AG04450 (cell line): ENCODE measurements at regions of chr9 and their contacts with region 1.

Region 1: DNA sequence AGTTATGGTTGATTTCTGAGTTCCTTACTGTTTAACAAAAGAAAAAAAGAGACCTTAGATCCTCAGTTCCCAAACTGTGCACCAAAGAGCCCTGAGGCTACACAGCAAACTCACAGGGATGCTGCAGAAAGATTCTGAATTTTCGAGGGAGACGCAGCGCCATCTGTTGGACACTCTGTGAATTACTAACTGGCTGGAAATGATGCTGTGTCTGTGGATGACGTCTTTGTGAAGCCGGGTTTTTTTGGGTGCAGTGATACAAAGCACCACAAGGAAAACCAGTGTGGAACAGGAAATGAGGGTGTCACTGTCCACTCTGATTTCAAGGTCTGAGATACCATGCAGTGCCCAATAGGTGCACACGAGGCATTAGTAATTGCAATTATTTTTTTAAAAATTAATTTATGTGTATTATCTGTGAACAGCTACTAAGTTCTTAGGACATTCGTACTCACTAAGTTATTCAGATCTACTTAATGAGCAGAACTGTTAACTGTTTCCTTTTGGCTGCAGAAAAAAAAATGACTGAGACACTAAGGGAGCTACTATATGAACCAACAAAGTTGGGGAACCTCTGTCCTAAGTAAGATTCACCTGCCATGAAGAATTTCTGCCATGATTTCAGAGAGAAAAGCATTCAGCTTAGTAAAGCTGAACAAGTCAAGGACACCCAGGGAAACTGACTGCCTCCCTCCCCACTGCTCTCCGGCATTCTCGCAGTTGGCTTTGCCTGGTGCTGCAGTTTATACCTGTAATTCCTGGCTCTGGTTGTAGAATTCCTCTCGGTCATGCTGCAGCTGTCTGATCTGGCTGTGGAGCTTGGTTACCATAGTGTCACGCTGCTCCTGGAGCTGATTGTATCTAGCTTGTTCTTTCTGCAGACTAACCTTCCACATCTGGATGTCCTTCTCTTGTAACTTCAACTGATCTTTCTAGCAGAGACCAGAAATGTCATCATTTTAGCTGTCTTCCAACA is 23.4 kb downstream of the SPACA9 start:
- DNase-seq: peak; percentile 57
- H3K4me3 ChIP-seq: no peak overlapping the region
- H3K27ac ChIP-seq: no peak overlapping the region
- H3K27me3 ChIP-seq: no peaks in the 10 kb centered on the region
- CTCF ChIP-seq: peak; percentile 92

Region 2: DNA sequence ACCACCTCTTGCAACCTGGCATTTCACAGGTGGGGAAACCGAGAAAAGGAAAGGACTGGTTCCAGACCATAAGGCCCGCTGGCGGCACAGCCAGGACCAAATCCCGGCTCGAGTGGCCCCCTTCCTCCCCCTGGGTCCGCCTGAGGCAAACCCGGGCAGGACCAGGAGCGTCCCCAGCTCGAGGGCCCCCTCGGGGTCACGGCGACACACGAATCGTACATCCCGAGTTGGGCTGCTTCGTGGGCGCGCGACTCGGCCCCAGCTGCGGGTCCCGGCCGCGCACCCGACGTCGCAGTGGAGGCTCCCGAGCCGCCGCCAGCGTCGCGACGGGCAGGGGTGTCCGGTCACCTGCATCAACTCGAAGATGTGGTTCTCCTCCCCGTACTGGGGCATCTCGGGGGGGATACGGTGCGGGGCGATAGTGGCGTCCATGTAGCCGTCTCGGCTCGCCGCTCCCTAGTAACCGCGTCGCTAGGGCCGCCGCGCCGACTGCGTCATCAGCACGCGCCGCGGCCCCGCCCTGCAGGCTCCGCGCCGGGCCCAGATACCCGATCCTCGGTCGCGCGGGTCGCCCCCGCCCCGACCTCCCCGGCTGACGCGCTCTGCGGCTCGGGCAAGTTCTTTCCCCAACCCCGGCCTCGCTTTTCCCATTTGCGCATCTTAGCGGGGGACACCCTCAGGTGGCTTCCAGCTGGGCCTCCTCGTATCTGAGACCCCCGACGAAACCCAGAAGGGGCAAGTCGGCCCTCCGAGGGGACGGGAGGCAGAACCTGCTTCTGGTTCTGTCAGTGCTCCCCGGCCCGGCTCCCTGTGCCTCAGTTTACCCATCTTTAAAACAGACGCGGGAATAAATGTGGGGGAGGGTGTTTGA is 24.1 kb before region 1 on chr9 and contains the start of gene AK8:
- CTCF ChIA-PET with region 1: interaction called, 11 read pairs
- POLR2A ChIA-PET with region 1: no interaction called
- DNase-seq: no peak
- H3K4me3 ChIP-seq: peak within 1 kb of the TSS; percentile 90
- H3K27ac ChIP-seq: no peak within 1 kb of the TSS
- H3K27me3 ChIP-seq: no peaks in the 10 kb centered on the region
- CTCF ChIP-seq: no peak
- polyA plus RNA-seq, gene AK8: 0.14 and 0.15 TPM in 2 replicates

Region 3: DNA sequence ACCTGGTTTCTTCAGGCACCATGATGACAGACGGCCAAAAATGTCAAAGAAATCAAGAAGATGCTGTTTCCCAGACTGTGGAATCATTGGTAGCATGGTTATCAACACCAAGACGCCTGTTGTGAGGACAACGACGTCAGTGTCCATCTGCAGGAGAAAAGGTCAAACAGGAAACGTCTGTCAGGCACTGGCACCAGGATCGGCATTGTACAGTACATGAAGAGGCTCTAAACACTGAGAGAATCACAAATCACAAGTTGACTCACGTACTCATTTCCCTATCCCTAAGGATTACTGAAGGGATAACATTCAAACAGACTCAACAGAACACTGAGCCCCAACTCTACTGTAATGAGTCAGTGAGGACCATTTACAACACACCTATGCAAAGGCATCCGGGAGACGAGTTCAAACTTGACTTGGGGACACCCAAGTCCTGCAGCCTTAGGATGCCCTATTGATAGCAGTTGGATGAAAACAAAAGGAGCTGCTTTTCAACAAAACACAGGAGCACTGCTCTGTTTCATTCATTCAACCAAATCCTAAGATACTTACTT is 21.3 kb after region 1 on chr9:
- CTCF ChIA-PET with region 1: interaction called, 39 read pairs
- POLR2A ChIA-PET with region 1: no interaction called
- DNase-seq: no peak
- H3K4me3 ChIP-seq: no peak overlapping the region
- H3K27ac ChIP-seq: no peak overlapping the region
- H3K27me3 ChIP-seq: no peaks in the 10 kb centered on the region
- CTCF ChIP-seq: no peak

Region 4: DNA sequence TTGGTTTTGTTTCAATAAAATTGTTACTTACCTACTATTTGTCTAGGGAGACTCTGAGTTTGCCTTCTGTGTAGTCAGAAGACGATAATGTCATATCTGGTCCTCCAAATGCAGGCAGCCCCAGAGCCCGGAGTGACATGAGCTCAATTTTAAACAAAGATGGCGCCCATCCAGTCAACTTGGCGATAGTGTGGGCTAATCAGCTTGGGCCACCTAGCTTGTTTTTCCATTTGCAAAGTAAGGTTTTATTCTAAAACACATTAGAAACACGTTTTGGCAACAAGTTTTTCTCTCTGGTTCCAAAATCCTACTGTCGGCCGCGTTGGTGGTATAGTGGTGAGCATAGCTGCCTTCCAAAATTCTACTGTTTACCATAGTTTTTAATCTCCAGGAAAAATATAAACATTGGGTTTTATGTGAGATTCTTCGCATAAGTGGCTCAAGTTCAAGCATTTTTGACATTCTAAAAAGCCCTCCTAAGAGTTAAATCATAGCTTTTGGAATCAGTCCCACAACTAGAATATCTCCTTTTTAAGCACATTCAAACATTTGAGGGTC is 29.1 kb after region 1 on chr9:
- CTCF ChIA-PET with region 1: interaction called, 33 read pairs
- POLR2A ChIA-PET with region 1: no interaction called
- DNase-seq: no peak
- H3K4me3 ChIP-seq: no peak overlapping the region
- H3K27ac ChIP-seq: peak overlapping the region; percentile 25
- H3K27me3 ChIP-seq: no peaks in the 10 kb centered on the region
- CTCF ChIP-seq: no peak